Breast epithelium (tissue), 4 donors: ENCODE measurements at regions of chr2 and their contacts with region 1.

Region 1: GRCh38 chr2:237012577-237013267 is 73.0 kb upstream of the COPS8 start:
- DNase-seq: no peak
- H3K4me3 ChIP-seq: no peak overlapping the region
- H3K27ac ChIP-seq: peak overlapping the region in 1 of 2 donors; percentile 27
- H3K4me1 ChIP-seq: no peaks in the 10 kb centered on the region
- H3K27me3 ChIP-seq: no peaks in the 10 kb centered on the region
- CTCF ChIP-seq: no peak
- POLR2A ChIP-seq: no peak

Region 2: GRCh38 chr2:235087812-235088495 is 1924.8 kb before region 1 on chr2:
- intact Hi-C with region 1: loop called (anchors 10 kb)
- DNase-seq: no peak
- H3K4me3 ChIP-seq: peak overlapping the region in 2 of 3 donors; percentile 5 to 38
- H3K27ac ChIP-seq: no peak overlapping the region
- H3K4me1 ChIP-seq: no peaks in the 10 kb centered on the region
- H3K27me3 ChIP-seq: no peaks in the 10 kb centered on the region
- CTCF ChIP-seq: peak in 1 of 3 donors; percentile 19
- POLR2A ChIP-seq: no peak

Region 3: GRCh38 chr2:237904801-237905599 is 892.3 kb after region 1 on chr2:
- intact Hi-C with region 1: no loop called
- DNase-seq: peak in 1 of 2 donors; percentile 28
- H3K4me3 ChIP-seq: no peak overlapping the region
- H3K27ac ChIP-seq: peak overlapping the region; percentile 55 to 83
- H3K4me1 ChIP-seq: no peaks in the 10 kb centered on the region
- H3K27me3 ChIP-seq: no peaks in the 10 kb centered on the region
- CTCF ChIP-seq: no peak
- POLR2A ChIP-seq: no peak